Heart left ventricle (tissue), 16 donors: ENCODE measurements at regions of chr11 and their contacts with region 1.

Region 1: GRCh38 chr11:118145285-118146227 is 7.1 kb downstream of the SCN4B start:
- DNase-seq: peak; percentile 83 to 93 (median 87)
- ATAC-seq: peak; percentile 81 to 90 (median 86)
- H3K4me3 ChIP-seq: peak overlapping the region; percentile 22 to 92 (median 60)
- H3K27ac ChIP-seq: peak overlapping the region in 10 of 12 donors; percentile 41 to 80 (median 74)
- H3K4me1 ChIP-seq: peaks cover 0 to 60% (median 21%) of the 10 kb centered on the region in 12 donors
- H3K27me3 ChIP-seq: peaks cover 0 to under 1% (median 0%) of the 10 kb centered on the region in 9 donors
- CTCF ChIP-seq: peak; percentile 85 to 97 (median 94)
- POLR2A ChIP-seq: peak in 1 of 2 donors; percentile 28

Region 2: DNA sequence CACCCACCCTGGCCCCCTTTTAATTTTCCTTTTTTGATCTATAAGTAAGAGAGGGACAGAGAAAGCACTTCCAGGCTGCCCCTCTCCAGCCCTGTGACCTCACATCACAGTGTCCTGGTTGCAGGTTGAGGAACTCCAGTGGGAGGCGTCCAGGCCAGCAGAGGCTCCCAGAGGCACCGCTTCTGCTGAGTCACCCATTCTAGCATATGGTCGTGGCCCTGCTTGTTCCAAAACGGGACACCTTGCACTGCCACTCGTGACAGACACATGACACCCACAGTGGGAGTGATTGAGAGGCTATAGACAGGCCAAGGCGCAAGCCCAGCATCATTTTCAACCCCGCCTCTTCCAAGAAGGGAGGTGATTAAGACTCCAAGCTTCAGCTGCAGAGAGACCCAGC is 84.7 kb before region 1 on chr11:
- intact Hi-C with region 1: loop called in 1 of 10 experiments (anchors 10 kb)
- DNase-seq: peak in 3 of 5 donors; percentile 19 to 59 (median 52)
- ATAC-seq: peak; percentile 23 to 72 (median 58)
- H3K4me3 ChIP-seq: no peak overlapping the region
- H3K27ac ChIP-seq: no peak overlapping the region
- H3K4me1 ChIP-seq: peaks cover 0 to 11% (median 0%) of the 10 kb centered on the region in 12 donors
- H3K27me3 ChIP-seq: no peaks in the 10 kb centered on the region
- CTCF ChIP-seq: no peak
- POLR2A ChIP-seq: no peak

Region 3: GRCh38 chr11:118171269-118172062 is 25.9 kb after region 1 on chr11:
- intact Hi-C with region 1: loop called in 7 of 10 experiments (anchors 1 to 2 kb)
- DNase-seq: peak; percentile 72 to 86 (median 79)
- ATAC-seq: peak; percentile 35 to 71 (median 68)
- H3K4me3 ChIP-seq: peak overlapping the region in 4 of 12 donors; percentile 17 to 34 (median 21)
- H3K27ac ChIP-seq: peak overlapping the region in 2 of 12 donors; percentile 20 to 44
- H3K4me1 ChIP-seq: peaks cover 3 to 46% (median 18%) of the 10 kb centered on the region in 12 donors
- H3K27me3 ChIP-seq: peaks cover 0 to 8% (median 0%) of the 10 kb centered on the region in 9 donors
- CTCF ChIP-seq: peak in 11 of 12 donors; percentile 86 to 94 (median 91)
- POLR2A ChIP-seq: no peak

Region 4: DNA sequence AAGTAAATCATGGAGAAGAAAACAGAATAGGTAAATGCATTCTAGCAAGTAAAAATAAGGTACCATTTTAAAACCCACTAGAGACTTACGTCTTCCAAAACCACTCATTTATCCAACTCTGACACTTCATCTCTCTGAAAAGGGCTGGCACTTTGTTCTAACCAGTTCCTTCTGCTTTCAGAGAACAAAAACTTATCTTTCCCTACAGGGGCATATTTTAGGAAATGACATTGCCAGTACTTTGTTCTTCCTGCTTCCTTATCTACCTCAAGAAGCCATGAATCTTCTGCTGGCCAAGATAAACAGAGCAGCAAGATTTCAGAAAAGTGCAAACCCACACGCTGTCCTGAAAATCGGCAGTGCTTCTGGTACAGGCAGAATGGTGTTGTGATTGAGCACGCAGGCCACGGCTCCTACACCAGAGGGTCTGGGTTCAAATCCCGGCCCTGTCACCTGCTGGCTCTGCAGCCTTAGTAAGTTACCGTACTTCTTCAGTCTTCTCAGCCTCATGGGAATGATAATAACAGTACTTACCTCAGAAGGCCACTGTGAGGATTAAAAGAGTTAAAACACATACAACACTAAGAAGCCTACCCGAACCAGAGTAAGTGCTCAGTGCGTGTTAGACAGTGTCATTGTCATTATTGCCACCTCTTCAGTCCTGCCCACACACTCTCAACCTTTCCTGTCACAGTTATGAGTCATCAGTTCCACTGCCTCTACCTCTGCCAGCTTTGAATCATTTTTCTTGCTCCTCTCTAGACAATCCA is 95.6 kb after region 1 on chr11:
- intact Hi-C with region 1: no loop called
- DNase-seq: peak in 2 of 5 donors; percentile 12 to 46
- ATAC-seq: peak; percentile 82 to 95 (median 91)
- H3K4me3 ChIP-seq: peak overlapping the region in 1 of 12 donors; percentile 30
- H3K27ac ChIP-seq: peak overlapping the region in 11 of 12 donors; percentile 6 to 90 (median 56)
- H3K4me1 ChIP-seq: peaks cover 0 to 44% (median 13%) of the 10 kb centered on the region in 12 donors
- H3K27me3 ChIP-seq: no peaks in the 10 kb centered on the region
- CTCF ChIP-seq: no peak
- POLR2A ChIP-seq: peak in 1 of 2 donors; percentile 22

Region 5: GRCh38 chr11:118290923-118291322 is 145.4 kb after region 1 on chr11:
- intact Hi-C with region 1: loop called in 8 of 10 experiments (anchors 1 to 5 kb)
- DNase-seq: peak in 1 of 5 donors; percentile 23
- ATAC-seq: peak; percentile 67 to 88 (median 82)
- H3K4me3 ChIP-seq: peak overlapping the region in 1 of 12 donors; percentile 9
- H3K27ac ChIP-seq: peak overlapping the region in 1 of 12 donors; percentile 10
- H3K4me1 ChIP-seq: no peaks in the 10 kb centered on the region
- H3K27me3 ChIP-seq: no peaks in the 10 kb centered on the region
- CTCF ChIP-seq: peak in 11 of 12 donors; percentile 18 to 61 (median 44)
- POLR2A ChIP-seq: no peak

Region 6: GRCh38 chr11:118353084-118353710 is 207.6 kb after region 1 on chr11:
- intact Hi-C with region 1: loop called in 6 of 10 experiments (anchors 5 to 10 kb)
- DNase-seq: no peak
- ATAC-seq: no peak
- H3K4me3 ChIP-seq: no peak overlapping the region
- H3K27ac ChIP-seq: no peak overlapping the region
- H3K4me1 ChIP-seq: no peaks in the 10 kb centered on the region
- H3K27me3 ChIP-seq: peaks cover 0 to 14% (median 0%) of the 10 kb centered on the region in 9 donors
- CTCF ChIP-seq: peak; percentile 24 to 72 (median 58)
- POLR2A ChIP-seq: no peak

Region 7: DNA sequence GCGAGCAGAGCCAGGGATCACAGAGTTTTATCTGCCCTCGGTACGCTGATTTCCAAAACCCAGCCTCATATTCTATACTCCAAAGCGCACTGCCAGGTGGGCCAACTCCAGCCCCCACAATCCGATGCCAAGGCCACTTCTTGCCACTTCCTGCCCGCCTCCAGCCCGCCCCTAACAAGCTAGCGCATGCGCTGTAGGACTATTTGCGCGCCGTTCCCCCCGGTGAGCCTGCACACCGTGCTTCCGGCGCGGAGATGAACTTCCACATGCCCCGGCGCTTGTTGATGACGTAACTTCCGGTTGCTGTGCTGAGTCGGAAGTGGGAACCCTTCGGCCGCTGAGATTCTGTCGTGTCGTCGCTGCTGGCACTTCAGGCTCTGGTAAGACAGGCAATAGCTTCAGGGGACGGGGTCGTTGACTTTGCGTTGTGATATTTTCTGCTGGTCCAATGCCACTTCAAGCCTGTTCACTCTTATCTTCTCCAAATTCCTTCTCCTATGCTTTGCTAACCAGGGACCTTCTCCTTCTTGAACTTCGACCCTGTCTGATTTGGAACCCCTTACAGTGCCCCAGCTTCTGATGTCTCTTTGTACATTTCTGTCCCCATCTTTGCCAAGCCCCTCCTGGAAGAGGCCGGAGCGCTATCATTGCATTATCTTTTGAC is 213.9 kb after region 1 on chr11 and contains the start of gene UBE4A:
- intact Hi-C with region 1: loop called in 6 of 10 experiments (anchors 5 to 10 kb)
- DNase-seq: peak; percentile 95 to 98 (median 97)
- ATAC-seq: peak; percentile 90 to 98 (median 96)
- H3K4me3 ChIP-seq: peak within 1 kb of the TSS; percentile 65 to 86 (median 79)
- H3K27ac ChIP-seq: peak within 1 kb of the TSS in 11 of 12 donors; percentile 3 to 80 (median 66)
- H3K4me1 ChIP-seq: peaks cover 0 to 30% (median 20%) of the 10 kb centered on the region in 12 donors
- H3K27me3 ChIP-seq: no peaks in the 10 kb centered on the region
- CTCF ChIP-seq: peak in 1 of 12 donors; percentile 9
- POLR2A ChIP-seq: peak in 1 of 2 donors; percentile 53
- total RNA-seq, gene UBE4A: 35.6 to 50.3 (median 40.9) TPM